AG04449 (cell line): ENCODE measurements at regions of chr6 and their contacts with region 1.

Region 1: DNA sequence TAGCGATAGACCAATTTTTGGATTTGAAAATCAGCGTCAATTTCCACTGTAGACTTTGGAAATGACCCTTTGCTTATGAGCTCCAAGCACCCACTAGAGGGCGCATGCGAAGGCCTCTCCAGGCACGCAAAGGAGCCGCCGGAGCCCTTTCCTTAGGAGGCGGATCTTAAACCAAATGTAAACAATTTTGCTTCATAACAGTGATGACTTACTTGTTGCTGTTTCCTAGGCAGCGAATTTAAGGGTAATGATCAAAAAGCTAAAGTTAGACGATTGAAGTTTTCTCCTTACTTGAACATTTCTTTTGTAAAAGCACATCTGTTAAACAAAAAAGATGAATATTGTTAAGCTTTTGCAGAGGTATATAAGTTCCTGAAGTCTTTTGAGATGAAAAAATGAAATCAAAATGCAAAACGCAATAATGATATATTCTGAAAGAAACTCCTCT is 29.2 kb upstream of the EXOC2 start:
- DNase-seq: peak; percentile 29
- H3K4me3 ChIP-seq: no peak overlapping the region
- CTCF ChIP-seq: peak; percentile 89

Region 2: DNA sequence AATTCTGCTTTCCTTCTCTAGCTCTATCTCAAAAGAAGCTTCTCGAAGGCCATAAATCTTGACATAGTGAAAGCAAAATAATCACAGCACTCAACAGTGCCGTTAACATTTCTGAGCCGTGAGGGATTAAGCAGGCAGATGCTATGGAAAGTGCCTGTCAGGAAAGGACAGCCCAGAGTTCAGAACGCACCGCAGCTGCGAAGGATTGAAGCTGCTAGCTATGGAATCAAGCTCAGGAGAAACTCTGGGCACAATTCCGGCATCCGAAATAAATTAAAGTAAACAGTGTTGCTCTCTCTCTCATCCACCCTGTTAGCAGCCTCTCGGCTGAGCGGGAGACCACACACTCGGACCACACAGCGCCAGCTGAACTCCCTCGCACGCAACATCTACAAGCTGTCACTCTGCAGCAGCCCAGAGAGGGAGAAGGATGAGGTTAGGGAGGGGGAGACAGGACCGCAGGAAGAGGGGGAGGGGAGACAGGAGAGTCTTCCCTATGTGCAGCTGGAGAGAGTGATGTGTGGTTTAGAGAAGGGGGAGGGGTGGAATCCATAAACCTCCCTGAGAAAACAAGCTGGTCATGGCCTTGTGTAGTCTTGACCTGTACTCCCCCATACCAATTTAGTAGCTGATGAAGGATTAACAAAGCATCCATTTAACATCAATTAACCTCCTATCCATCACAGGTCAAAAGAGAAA is 38.2 kb before region 1 on chr6:
- CTCF ChIA-PET with region 1: interaction called, 10 read pairs
- POLR2A ChIA-PET with region 1: no interaction called
- DNase-seq: peak; percentile 38
- H3K4me3 ChIP-seq: peak overlapping the region; percentile 51
- CTCF ChIP-seq: no peak

Region 3: DNA sequence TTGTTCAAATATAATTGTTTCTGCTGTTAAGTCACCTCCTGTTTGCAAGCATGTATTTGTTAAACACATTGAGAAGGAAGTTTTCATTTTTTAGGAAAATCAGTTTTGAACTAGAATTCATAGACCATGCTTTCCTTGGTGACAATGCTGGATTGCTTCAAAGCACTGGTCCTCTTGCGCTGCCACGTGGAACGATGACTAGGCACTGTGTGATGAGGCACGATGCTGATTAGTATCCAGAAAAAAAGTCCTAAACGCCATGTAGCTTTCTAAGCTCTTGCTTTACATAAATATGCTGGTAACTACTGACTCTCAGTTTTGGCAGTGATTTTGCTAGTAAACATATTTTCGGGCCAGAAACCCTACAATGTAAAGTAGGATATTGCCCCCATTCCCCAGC is 18.1 kb before region 1 on chr6:
- CTCF ChIA-PET with region 1: interaction called, 67 read pairs
- POLR2A ChIA-PET with region 1: no interaction called
- DNase-seq: no peak
- H3K4me3 ChIP-seq: no peak overlapping the region
- CTCF ChIP-seq: no peak

Region 4: DNA sequence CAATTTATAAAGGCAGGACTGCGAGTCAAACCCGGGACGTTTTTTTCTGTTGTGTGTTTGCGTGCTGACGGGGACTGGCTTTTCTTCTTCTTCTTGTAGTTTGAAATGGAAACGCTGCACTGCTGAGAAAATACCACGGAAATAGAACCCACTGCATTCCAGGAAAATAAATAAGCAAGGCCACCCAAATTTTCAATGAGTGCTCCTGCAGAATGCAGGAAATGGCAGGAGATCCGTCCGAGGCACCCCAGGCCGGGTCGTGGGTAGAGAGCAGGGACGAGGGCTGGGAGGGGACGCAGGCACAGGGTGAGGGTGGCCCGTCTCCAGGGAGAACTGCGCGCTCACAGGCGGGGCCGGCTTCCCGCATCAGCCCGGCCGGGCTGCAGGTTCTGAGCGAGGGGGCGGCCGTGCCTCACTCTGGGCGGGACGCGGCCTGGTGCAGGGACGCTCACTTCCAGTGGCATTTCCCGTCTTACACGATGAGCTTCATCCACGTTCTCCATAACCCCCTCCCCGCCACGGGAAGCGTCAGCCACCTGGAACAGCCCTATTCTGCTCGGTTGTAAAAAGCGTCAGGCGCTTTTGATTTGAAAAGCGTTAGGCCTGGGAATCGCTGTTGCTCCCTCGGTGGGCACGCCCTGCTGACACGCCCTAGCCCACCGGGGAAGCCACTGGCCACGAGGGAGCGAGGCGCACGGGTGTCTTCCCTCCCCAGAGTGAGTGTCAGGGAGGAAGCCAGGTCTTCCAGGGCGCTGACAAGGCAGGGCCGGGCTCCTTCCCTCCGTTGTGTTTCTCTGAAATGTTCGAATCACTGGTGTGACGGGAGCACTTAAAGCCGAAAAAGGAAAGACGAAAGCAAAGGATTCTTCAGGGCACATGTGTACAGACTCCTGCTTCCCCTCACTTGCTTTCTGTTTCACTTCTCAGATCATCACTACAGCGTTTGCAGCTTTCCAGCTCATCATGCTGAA is 11.2 kb before region 1 on chr6:
- CTCF ChIA-PET with region 1: interaction called, 67 read pairs
- POLR2A ChIA-PET with region 1: no interaction called
- DNase-seq: peak; percentile 12
- H3K4me3 ChIP-seq: peak overlapping the region; percentile 66
- CTCF ChIP-seq: no peak

Region 5: DNA sequence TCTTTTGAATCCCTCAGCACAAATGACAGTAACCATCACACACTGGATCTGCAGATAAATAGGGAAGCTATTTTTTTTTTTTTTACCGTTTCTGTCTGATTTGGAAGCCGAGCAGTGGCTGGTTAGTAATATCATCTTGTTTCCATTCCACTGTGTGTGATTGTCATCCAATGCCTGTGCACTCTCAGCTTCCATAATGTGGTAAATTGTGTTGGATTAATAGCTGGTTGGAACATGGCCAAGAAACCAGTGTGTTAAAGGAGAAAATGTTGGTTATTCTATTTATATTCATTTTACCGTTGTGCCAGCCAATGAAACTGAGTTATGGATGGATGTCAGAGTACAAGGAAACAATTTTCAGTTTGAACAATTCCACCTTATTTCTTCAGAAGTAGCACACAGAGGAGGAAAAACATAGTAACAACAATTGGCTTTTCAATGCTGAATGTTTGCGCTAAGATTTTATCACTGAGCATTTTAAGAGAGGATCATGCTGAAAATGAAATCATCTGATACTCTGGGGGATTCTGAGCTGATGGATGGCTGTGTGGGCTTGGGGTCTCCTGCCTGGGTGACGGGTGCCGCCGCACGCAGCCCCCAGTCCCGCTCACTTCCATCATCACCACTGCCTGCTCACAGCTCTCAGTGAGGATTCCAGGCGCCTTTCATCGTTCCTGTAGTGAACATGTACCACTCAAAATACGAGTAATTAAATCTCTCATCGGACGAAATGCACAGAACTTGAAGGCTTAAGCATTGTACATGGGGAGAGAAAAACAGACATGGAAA is 11.5 kb after region 1 on chr6:
- CTCF ChIA-PET with region 1: interaction called, 19 read pairs
- POLR2A ChIA-PET with region 1: no interaction called
- DNase-seq: no peak
- H3K4me3 ChIP-seq: no peak overlapping the region
- CTCF ChIP-seq: no peak

Region 6: DNA sequence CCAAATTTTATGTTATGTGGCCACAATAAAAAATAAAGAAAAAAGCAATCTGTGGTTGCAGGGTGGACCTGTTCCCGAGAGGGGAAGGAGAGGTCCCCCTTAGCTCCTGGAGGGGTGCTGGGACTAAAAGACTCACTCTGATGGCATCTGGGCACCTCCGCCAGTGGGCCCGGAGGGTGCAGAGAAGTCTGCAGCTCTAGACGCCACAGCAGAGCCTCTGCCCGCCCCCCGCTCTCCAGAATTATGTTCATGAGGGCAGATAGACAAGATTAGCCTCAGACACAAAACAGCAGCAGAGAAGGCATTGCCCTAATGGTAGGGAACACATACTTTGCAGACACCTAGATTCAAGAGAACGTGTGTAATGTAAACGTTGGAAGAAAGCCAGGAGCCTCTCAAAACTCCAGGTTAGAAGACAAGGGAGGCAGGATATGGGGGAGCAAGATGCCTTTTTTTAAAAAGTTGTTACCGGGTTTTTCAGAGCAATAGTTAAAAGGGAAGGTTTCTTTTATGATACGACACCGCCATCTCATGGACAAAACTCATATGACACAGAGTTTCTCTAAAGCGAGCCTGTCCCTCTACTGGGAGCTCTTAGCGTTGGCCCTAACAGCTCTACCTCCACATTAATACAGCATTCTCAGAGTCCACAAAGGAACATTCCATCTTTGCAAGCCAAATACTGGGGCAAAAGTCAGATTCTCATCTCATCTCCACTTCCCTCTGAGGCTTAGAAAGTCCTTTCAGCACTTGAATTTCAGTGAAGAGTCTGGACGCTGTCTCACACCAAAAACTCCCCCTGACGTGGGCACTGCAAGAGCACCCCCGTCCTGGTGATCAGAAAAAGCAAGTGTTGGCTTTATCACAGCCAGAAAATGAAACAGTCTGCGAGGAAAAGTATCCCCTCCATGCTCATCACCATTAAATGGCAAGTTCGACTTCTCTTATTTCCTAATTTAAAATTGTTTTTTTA is 714.5 kb after region 1 on chr6:
- CTCF ChIA-PET with region 1: interaction called, 12 read pairs
- POLR2A ChIA-PET with region 1: no interaction called
- DNase-seq: peak; percentile 5
- H3K4me3 ChIP-seq: no peak overlapping the region
- CTCF ChIP-seq: peak; percentile 69